MCF 10A (cell line): ENCODE measurements at regions of chr2 and their contacts with region 1.

Region 1: DNA sequence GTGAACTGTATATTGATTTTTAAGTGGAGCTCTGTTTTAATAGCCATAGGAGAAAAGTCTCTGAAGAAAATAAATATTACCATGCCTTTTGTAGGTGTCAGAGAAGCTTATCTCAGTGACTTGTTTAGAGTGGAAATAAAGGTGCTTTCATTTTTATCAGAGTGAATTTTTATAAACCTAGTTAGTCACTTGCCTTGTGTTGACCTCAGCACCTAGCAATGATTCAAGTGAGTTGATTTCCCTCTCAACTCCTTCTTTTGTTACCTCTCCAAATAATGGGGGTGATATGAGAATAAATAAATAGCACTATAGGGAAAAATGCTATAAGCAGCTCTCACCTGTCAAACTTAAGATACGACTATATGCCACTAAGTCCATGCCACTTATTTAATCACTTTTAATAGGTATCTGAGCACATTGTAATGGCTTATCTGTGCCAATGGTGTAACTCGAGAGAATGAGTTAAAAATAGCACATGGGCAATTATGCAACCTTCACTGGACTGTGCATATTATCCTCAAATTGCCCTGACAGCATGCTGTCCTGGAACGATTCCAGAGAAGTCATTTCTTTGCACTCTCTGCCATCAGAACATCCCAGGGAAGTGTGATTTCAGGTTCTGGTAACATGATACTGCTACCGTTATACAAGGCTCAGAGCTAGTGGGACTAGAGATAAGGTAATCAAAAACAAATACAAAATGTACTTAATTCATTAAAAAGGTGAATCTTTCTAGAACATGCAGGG is 290.8 kb downstream of the CCDC85A start:
- DNase-seq: peak; percentile 86
- H3K4me3 Mint-ChIP-seq: no peak overlapping the region
- H3K27ac Mint-ChIP-seq: no peak overlapping the region
- H3K4me1 Mint-ChIP-seq: peaks cover 13% of the 10 kb centered on the region
- H3K27me3 Mint-ChIP-seq: no peaks in the 10 kb centered on the region
- CTCF ChIP-seq: no peak

Region 2: GRCh38 chr2:56749152-56749752 is 274.7 kb after region 1 on chr2:
- CTCF ChIA-PET with region 1: no interaction called
- POLR2A ChIA-PET with region 1: no interaction called
- intact Hi-C with region 1: loop called (anchors 10 kb)
- DNase-seq: peak; percentile 44
- H3K4me3 Mint-ChIP-seq: no peak overlapping the region
- H3K27ac Mint-ChIP-seq: no peak overlapping the region
- H3K4me1 Mint-ChIP-seq: no peaks in the 10 kb centered on the region
- H3K27me3 Mint-ChIP-seq: no peaks in the 10 kb centered on the region
- CTCF ChIP-seq: peak; percentile 40